ENCODE measurements at regions of chr20 and their contacts with region 1.

Region 1: DNA sequence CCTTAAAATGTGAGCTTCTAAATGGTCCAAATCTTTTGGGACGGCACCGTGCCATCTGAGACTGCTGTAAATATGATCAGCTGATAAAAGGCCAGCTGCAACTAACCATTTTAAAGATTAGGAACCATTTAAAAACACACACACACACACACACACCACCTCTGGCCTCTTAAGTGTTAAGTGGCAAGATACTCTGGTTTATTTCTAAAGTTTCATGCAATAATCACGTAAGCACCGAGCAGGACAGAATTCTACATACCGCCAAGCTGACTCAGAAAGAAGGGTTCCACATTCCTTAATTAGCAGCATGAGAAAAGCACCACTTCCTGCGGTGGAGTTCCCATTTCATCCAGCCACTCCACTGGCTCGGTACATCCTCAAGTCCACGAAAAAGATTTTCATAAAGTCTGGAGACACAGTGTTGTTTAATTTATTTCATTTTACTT is 17.8 kb upstream of the ZNF217 start:
- DNase-seq: no peak
- ATAC-seq: no peak
- H3K4me3 Mint-ChIP-seq: no peak overlapping the region
- H3K27ac Mint-ChIP-seq: peak overlapping the region in 9 of 10 donors; percentile 24 to 85 (median 69)
- H3K4me1 Mint-ChIP-seq: peaks cover 13 to 36% (median 28%) of the 10 kb centered on the region in 4 donors
- H3K27me3 Mint-ChIP-seq: no peaks in the 10 kb centered on the region

Region 2: GRCh38 chr20:53594068-53595017 is 17.1 kb before region 1 on chr20:
- POLR2A ChIA-PET with region 1: interaction called, 143 read pairs
- DNase-seq: peak; percentile 91 to 100 (median 97)
- ATAC-seq: peak; percentile 58 to 67
- H3K4me3 Mint-ChIP-seq: peak overlapping the region; percentile 82 to 98 (median 90)
- H3K27ac Mint-ChIP-seq: peak overlapping the region; percentile 88 to 99 (median 96)
- H3K4me1 Mint-ChIP-seq: peaks cover 31 to 71% (median 57%) of the 10 kb centered on the region in 4 donors
- H3K27me3 Mint-ChIP-seq: no peaks in the 10 kb centered on the region

Region 3: DNA sequence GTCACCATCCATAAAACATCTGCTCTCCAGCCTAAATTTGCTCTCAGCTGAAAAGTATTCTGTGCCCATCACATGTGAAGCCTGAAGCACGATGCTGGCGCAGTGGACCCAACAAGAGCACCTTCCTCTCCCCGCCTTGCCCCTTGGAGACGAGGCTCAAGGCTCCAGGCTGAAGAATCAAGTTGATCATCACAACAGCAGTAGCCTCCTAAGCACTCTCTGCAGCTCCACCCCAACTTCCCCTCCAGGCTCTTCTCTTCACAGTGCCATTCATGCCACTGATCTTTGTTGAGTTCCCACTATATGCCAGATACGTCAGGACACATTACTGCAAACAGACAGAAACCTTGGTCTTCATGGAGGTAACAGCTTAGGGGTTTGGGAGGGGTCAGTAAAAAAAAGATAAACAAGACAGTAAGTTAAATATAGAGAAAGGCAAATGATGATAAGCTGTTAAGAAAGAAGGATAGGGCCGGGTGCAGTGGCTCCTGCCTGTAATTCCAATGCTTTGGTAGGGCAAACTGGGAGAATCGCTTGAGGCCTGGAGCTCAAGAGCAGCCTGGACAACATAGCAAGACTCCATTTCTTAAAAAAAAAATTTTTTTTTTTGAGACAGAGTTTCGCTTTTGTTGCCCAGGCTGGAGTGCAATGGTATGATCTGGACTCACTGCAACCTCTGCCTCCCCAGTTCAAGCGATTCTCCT is 23.9 kb after region 1 on chr20:
- POLR2A ChIA-PET with region 1: interaction called, 15 read pairs
- DNase-seq: no peak
- ATAC-seq: peak; percentile 36 to 53
- H3K4me3 Mint-ChIP-seq: peak overlapping the region in 4 of 10 donors; percentile 1 to 45 (median 39)
- H3K27ac Mint-ChIP-seq: peak overlapping the region in 7 of 10 donors; percentile 4 to 83 (median 52)
- H3K4me1 Mint-ChIP-seq: peaks cover 21 to 42% (median 37%) of the 10 kb centered on the region in 4 donors
- H3K27me3 Mint-ChIP-seq: no peaks in the 10 kb centered on the region

Region 4: DNA sequence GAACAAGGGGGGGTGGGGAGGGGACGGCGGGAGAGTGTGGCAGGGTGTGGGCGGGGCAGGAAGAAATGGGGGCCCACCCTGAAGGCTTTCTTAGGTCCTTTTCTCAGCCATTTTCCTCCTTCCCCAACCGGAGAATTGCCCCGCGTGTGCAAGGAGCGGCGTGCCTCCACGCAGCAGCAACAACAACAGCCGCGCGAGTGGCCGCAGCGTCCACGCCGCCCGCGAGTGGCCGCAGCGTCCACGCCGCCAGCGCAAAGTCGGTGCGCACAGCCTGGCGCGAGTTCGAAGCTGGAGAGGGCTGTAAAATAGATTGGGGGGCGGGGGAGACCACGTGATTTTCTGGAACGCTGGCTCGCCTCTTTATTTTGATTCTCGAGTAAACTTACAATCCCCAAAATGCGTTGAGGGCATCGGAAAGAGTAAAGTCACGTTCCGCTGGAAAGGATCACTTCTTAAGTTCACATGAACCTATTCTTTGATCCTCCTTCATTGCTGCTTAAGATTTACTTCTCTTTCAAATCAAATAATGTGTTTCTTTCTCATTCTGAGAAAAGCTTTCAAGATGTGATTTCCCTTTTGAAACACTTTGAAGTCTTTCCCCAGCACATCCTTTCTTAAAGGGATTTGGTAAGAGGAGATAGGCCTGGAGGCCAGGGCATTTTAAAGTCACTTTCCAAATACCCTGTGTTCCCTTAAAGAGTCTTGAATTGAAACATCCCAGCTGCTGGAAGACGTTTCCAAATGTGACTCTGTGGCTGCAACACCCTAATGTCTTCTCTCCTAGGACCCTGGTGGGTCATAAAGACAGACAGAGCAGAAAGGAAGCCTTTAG is 48.8 kb after region 1 on chr20:
- POLR2A ChIA-PET with region 1: interaction called, 17 read pairs
- DNase-seq: peak in 8 of 10 donors; percentile 13 to 52 (median 32)
- ATAC-seq: peak; percentile 42 to 48
- H3K4me3 Mint-ChIP-seq: peak overlapping the region; percentile 81 to 93 (median 86)
- H3K27ac Mint-ChIP-seq: peak overlapping the region; percentile 82 to 96 (median 92)
- H3K4me1 Mint-ChIP-seq: peaks cover 18 to 70% (median 66%) of the 10 kb centered on the region in 4 donors
- H3K27me3 Mint-ChIP-seq: no peaks in the 10 kb centered on the region

Region 5: DNA sequence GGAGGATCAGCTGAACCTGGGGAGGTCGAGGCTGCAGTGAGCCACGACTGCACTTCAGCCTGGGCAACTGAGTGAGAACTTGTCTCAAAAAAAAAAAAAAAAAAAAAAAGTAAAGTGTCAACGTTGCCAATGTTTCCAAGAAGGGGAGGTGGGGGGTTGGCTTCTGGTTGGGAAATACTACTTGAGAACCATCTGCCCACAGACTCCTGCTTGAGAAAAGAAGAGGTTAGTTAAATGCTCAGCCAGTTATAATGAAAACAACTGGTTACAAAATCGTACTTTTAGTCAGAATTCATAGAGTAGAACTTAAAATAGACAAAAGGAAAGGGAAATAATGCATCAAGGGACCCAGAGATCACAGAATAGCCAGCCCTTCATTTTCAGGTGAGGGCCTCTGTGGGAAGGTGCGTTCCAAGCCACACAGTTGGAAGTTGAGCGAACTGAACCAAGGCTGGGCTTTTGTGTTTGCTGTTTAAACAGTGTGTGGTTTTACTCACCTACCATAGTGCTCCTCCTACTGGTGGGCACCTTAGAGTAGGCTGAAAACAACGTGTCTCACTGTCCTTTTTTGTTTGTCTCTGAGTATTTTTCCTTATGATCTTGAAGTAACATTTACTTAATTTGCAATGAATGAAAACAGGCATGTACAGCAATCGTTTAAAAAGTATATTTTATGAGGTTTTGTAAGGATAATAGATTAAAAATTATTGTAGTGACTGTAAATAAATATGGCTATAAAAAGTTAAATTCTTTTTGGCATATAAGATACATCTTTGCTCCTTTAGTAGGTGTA is 258.2 kb after region 1 on chr20:
- POLR2A ChIA-PET with region 1: interaction called, 10 read pairs
- DNase-seq: peak; percentile 15 to 87 (median 72)
- ATAC-seq: peak; percentile 63 to 65
- H3K4me3 Mint-ChIP-seq: peak overlapping the region in 9 of 10 donors; percentile 19 to 74 (median 56)
- H3K27ac Mint-ChIP-seq: peak overlapping the region; percentile 78 to 99 (median 93)
- H3K4me1 Mint-ChIP-seq: peaks cover 38 to 82% (median 75%) of the 10 kb centered on the region in 4 donors
- H3K27me3 Mint-ChIP-seq: peaks cover 0 to 2% (median 0%) of the 10 kb centered on the region in 5 donors